Right ventricle myocardium superior (tissue), 1 donor: ENCODE measurements at regions of chr5 and their contacts with region 1.

Region 1: DNA sequence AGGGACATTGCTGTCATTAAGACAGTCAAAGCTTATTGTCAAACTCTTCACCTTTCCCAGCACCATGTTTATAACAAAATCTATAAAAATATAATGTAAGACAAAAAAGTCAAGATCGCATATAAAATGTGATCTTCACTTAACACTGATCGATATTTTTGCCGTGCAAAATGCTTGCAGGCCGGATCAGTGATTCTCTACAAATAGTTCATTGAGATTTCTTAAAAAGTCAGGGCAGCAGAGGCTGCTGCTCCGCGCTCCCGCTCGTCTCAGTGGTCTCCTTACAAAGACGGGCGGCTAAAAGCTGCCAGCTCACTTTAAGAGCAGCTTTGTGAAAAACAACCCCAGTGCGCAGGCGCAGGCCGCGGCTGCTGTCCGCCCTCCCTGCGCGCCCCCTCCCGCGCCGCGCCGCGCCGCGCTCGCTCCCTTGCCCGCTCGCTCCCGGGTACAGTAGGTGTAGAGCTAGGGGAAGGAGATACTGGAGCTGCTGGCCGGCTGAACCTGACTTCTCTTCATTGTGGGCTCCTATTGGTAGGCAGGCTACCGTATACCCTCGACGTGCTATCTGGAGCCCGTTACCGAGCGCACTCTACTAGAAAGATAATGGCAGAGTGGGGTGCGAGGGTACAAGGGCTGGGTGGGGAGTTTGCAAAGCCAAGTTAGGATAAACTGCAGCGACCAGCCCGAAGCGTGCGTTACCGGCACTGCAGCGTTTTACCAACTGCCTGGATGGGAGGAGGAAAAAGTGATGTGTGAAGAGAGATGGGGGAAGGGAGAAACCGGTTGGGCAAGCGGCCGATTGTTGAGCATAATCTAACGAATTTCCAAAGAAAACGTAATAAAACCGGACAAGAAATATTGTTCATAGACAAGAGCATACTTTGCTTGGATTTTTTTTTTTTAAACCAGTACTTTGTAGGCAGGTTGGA is at the start of gene ARRDC3:
- DNase-seq: peak; percentile 98
- ATAC-seq: peak; percentile 77
- total RNA-seq, gene ARRDC3: 17.3 TPM

Region 2: GRCh38 chr5:91101600-91102379 is 281.5 kb before region 1 on chr5:
- intact Hi-C with region 1: loop called (anchors 2 kb)
- DNase-seq: peak; percentile 72
- ATAC-seq: peak; percentile 94

Region 3: GRCh38 chr5:91225848-91226686 is 157.2 kb before region 1 on chr5:
- intact Hi-C with region 1: loop called (anchors 5 kb)
- DNase-seq: no peak
- ATAC-seq: peak; percentile 67

Region 4: GRCh38 chr5:91280362-91281269 is 102.7 kb before region 1 on chr5:
- intact Hi-C with region 1: loop called (anchors 2 kb)
- DNase-seq: peak; percentile 95
- ATAC-seq: peak; percentile 98